PC-3 (cell line): ENCODE measurements at regions of chr6 and their contacts with region 1.

Region 1: GRCh38 chr6:110039364-110039980 is 61.4 kb downstream of the GPR6 start:
- DNase-seq: peak; percentile 85
- ATAC-seq: peak; percentile 93
- H3K4me3 ChIP-seq: peak overlapping the region; percentile 73
- H3K27ac ChIP-seq: no peak overlapping the region
- H3K4me1 ChIP-seq: peaks cover 5% of the 10 kb centered on the region
- H3K27me3 ChIP-seq: no peaks in the 10 kb centered on the region
- CTCF ChIP-seq: peak; percentile 84

Region 2: DNA sequence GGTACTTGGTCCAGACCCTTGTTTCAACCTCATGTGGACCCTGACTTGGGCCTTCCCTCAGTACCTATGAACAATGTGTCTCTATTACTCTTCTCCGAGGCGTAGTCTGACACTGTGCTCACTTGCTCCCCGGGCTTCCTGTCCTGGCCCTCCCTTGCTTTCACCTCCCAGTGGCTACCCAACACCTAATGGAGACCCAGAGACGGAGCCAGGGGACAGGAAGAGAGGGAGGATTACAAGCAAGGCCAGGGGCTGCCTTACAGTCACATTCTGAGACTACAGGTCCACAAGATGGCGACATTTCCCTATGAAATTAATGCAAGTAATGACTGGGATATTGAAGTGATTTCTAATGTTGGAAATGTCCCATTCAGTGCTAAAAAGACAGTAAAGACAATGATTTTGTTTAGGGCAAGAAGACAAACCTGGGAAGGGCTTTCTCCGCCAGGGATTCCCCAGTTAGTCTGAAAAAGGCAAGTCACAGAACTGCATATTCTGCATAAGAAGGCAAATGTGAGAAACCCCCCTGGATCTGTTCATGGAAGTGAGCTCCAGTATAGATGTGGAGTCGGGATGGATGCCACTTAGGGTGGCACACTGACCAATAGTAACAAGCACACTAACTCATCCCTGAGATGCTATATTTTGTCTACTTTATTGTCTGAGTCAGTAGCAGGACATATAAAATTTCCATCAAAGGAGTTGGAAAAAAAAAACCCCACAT is 512.4 kb before region 1 on chr6:
- CTCF ChIA-PET with region 1: interaction called, 4 read pairs
- POLR2A ChIA-PET with region 1: no interaction called
- intact Hi-C with region 1: loop called (anchors 1 kb)
- DNase-seq: peak; percentile 78
- ATAC-seq: peak; percentile 92
- H3K4me3 ChIP-seq: no peak overlapping the region
- H3K27ac ChIP-seq: no peak overlapping the region
- H3K4me1 ChIP-seq: peaks cover 4% of the 10 kb centered on the region; the same call in 1 of the 2 replicates
- H3K27me3 ChIP-seq: no peaks in the 10 kb centered on the region
- CTCF ChIP-seq: peak; percentile 76

Region 3: DNA sequence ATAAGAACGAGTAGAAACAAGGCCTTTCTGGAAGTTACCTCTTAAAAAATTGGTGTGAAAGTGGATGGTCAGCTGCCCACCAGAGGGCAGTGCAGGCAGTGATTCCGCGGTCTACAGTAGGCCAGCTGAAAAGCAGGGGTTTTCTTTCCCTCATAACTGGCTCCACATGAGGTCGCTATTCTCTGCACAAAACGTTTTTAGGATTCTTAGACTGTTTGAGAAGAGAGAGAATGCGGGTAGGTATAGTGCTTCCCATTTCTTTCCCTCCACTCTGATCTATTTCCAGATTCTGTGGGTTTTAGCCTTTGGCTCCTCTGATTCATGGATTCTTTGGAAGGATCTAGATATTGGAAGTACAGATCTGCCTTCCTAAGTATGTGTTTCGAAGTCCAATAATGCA is 334.2 kb before region 1 on chr6:
- CTCF ChIA-PET with region 1: interaction called, 39 read pairs
- POLR2A ChIA-PET with region 1: no interaction called
- intact Hi-C with region 1: loop called (anchors 1 kb)
- DNase-seq: peak; percentile 89
- ATAC-seq: peak; percentile 88
- H3K4me3 ChIP-seq: no peak overlapping the region
- H3K27ac ChIP-seq: no peak overlapping the region
- H3K4me1 ChIP-seq: no peaks in the 10 kb centered on the region
- H3K27me3 ChIP-seq: no peaks in the 10 kb centered on the region
- CTCF ChIP-seq: peak; percentile 94

Region 4: DNA sequence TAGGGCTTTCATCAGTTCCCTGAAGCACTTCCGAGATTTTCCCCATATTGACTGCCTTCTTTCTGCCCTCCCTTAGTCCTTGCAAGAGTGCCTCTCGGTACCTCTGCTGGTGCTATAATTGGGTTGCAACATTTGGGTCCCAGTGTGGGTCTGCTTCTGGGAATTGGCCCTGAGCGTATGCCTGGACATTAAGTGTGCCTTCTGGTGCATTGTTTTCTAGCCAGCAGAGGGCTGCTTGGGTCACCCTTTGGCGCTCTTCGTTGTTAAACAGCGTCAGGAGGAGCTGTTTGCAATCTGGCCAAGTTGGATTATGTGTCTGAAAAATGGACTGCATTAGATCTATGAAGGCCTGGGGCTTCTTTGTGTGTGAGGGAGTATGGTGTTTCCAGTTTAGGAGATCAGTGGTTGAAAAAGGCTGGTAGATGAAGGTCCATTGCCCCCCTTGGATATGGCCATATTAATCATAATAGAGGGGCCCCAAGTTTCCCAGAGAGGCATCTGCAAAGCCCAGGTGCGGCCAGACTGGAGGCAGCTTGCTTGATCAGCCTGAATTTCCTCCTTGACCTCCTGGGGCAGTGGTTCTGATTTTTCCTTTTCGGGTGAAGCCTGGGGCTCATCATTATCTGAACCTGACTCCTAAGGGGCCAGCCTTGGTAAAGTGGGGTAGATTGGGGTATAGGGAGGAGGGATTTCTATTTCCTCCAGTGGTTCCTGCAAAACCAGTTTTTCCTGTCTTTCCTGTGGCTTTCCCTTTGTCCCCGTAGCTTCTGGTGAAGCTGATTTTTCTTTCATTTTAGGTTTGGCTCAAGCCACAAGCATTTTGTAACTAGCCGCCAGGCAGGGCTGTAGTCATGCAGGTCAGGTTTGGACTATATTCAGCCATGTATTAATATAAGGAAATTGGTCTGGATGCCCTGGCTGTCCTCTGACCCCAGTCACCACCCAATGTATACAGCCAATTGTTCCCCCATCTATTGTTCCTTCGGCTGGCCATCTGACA is 146.7 kb before region 1 on chr6:
- CTCF ChIA-PET with region 1: interaction called, 17 read pairs
- POLR2A ChIA-PET with region 1: no interaction called
- intact Hi-C with region 1: loop called (anchors 1 kb)
- DNase-seq: peak; percentile 92
- ATAC-seq: peak; percentile 78
- H3K4me3 ChIP-seq: peak overlapping the region; percentile 58
- H3K27ac ChIP-seq: peak overlapping the region; percentile 68
- H3K4me1 ChIP-seq: peaks cover 19% of the 10 kb centered on the region
- H3K27me3 ChIP-seq: no peaks in the 10 kb centered on the region
- CTCF ChIP-seq: peak; percentile 46

Region 5: DNA sequence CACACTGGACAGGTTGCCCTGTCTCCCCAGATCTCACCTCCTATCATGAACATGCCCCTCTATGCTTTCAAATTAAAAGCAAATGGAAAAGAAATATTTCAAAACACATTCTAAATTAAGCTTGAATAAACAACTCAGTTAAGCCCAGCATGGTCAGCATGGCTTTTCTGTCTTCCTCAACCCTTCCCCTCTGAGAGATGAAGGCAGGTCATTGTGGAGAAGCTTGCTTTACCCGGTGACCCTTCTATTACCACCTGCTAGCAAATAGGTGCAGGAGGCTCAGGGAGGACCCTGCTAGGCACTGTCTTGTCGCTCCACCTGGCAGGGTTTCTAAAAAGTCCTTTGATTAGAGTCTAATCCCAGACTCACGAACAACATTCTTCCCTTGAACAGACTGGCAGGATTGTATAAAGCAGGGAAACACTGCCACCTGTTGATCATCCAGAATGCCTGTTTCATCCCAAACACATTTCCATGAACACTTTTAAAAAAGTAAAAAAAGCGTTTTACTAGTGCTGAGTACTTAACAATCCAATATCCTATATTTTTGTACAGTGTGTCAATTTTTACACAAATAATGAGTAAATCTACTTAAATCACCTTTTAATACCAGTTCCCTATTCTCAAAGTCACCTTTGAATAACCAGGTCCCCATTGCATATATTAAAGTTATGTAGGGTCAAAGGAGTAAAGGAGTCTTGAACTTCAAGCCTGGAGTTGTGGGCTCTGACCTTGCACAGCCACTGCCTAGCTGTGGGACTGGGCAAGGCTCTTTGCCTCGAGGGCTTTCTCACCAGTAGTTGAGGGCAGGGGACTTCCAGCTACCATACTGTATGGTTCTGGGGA is 14.1 kb after region 1 on chr6:
- CTCF ChIA-PET with region 1: interaction called, 21 read pairs
- POLR2A ChIA-PET with region 1: no interaction called
- intact Hi-C with region 1: no loop called
- DNase-seq: peak; percentile 46
- ATAC-seq: peak; percentile 79
- H3K4me3 ChIP-seq: no peak overlapping the region
- H3K27ac ChIP-seq: no peak overlapping the region
- H3K4me1 ChIP-seq: no peaks in the 10 kb centered on the region
- H3K27me3 ChIP-seq: peaks cover 16% of the 10 kb centered on the region; the same call in 1 of the 2 replicates
- CTCF ChIP-seq: peak; percentile 76

Region 6: GRCh38 chr6:110063594-110064263 is 24.3 kb after region 1 on chr6:
- CTCF ChIA-PET with region 1: interaction called, 12 read pairs
- POLR2A ChIA-PET with region 1: no interaction called
- intact Hi-C with region 1: no loop called
- DNase-seq: no peak
- ATAC-seq: no peak
- H3K4me3 ChIP-seq: no peak overlapping the region
- H3K27ac ChIP-seq: no peak overlapping the region
- H3K4me1 ChIP-seq: no peaks in the 10 kb centered on the region
- H3K27me3 ChIP-seq: peaks cover 49% of the 10 kb centered on the region
- CTCF ChIP-seq: no peak

Region 7: GRCh38 chr6:110389689-110390382 is 350.4 kb after region 1 on chr6:
- CTCF ChIA-PET with region 1: no interaction called
- POLR2A ChIA-PET with region 1: no interaction called
- intact Hi-C with region 1: loop called (anchors 5 kb)
- DNase-seq: no peak
- ATAC-seq: peak; percentile 29; the same call in 1 of the 2 replicates
- H3K4me3 ChIP-seq: no peak overlapping the region
- H3K27ac ChIP-seq: no peak overlapping the region
- H3K4me1 ChIP-seq: no peaks in the 10 kb centered on the region
- H3K27me3 ChIP-seq: no peaks in the 10 kb centered on the region
- CTCF ChIP-seq: no peak

Region 8: DNA sequence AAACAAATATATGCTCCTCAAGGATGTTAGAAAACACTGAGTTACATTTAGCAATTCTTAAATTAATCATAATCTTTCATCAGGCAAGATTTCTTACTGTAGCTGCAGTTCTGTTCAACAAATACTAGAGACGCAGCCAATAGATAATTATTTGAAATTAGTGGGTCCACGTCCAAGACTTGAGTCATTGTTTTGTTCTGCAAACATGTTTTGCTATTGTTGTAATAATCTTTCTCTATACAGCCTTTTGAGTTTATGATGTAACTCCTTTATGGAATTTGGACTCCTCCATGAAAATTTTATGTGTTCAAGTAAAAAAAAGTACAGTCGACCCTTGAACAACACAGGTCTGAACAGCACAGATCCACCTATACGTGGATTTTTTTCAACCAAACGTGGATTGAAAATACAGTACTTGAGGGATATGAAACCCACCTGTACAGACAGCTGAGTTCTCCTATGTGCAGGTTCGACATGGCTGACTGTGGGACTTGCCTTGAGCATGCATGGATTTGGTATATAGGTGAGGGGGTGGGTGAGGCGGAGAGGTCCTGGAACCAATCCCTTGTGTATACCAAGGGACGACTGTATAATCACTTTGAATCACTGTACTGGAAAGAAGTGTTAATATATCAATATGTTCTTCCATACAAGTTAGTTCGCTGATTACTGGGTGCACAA is 478.3 kb after region 1 on chr6:
- CTCF ChIA-PET with region 1: no interaction called
- POLR2A ChIA-PET with region 1: no interaction called
- intact Hi-C with region 1: no loop called
- DNase-seq: peak; percentile 46
- ATAC-seq: peak; percentile 72
- H3K4me3 ChIP-seq: peak overlapping the region; percentile 18; the same call in 1 of the 2 replicates
- H3K27ac ChIP-seq: peak overlapping the region; percentile 20
- H3K4me1 ChIP-seq: peaks cover 23% of the 10 kb centered on the region
- H3K27me3 ChIP-seq: no peaks in the 10 kb centered on the region
- CTCF ChIP-seq: no peak